Esophagus squamous epithelium (tissue), 5 donors: ENCODE measurements at regions of chr7 and their contacts with region 1.

Region 1: GRCh38 chr7:100799014-100799896 is 28.1 kb downstream of the EPHB4 start:
- DNase-seq: no peak
- H3K4me3 ChIP-seq: no peak overlapping the region
- H3K27ac ChIP-seq: no peak overlapping the region
- H3K4me1 ChIP-seq: peaks cover 10 to 56% (median 28%) of the 10 kb centered on the region in 3 donors
- H3K27me3 ChIP-seq: peaks cover 0 to 3% (median 0%) of the 10 kb centered on the region in 4 donors
- CTCF ChIP-seq: peak in 5 of 6 experiments; percentile 71 to 83 (median 75)
- POLR2A ChIP-seq: no peak

Region 2: DNA sequence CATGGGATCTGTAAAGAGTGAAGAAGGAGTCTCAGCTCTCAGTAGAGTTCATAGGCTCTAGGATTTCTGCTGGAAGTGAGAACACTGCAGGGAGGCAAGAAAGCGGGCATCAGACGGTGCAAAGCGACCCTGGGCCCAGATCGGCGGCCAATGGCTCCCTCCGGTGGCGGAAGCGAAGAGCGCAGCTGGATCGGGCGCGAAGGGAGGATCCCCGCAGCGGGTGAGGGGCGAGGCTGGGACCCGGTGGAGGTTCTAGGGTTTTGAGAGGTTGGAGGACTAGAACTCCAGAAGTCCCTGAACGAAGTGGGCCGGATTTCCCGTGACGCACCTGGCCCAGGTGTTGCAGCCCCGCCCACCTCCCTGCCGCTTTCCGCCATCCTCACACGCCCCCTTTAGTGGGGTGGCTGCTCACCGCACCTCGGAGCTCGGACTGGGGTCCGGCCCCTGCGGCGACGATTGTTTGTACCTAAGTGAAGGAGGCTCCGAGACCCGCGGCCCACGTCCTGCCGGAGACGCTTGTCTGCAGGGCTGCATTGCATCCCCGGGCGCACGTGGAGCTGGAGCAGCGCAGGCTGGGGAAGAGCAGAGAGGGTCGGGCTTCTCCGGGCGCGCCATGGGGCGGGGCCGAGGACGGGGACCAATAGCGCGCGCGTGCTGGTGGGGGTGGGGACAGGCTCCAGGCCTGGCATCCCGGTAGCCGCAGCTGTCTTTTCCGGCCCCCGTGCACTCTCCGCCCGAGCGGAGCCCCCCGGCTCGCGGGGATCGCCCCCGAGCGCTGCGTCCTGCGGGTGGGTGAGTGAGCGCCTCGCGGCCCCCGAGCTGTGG is 53.0 kb after region 1 on chr7 and contains the start of gene SLC12A9:
- intact Hi-C with region 1: loop called (anchors 5 kb)
- DNase-seq: peak; percentile 52
- H3K4me3 ChIP-seq: peak within 1 kb of the TSS; percentile 62 to 91 (median 80)
- H3K27ac ChIP-seq: peak within 1 kb of the TSS; percentile 70 to 87 (median 80)
- H3K4me1 ChIP-seq: peaks cover 17 to 34% (median 18%) of the 10 kb centered on the region in 3 donors
- H3K27me3 ChIP-seq: no peaks in the 10 kb centered on the region
- CTCF ChIP-seq: peak; percentile 88 to 95 (median 92)
- POLR2A ChIP-seq: peak in 2 of 4 donors; percentile 31 to 60
- total RNA-seq, gene SLC12A9: 9.9 to 19.6 (median 17.3) TPM

Region 3: GRCh38 chr7:101009629-101010028 is 210.4 kb after region 1 on chr7:
- intact Hi-C with region 1: no loop called
- DNase-seq: no peak
- H3K4me3 ChIP-seq: no peak overlapping the region
- H3K27ac ChIP-seq: no peak overlapping the region
- H3K4me1 ChIP-seq: no peaks in the 10 kb centered on the region
- H3K27me3 ChIP-seq: peaks cover 0 to 9% (median 0%) of the 10 kb centered on the region in 4 donors
- CTCF ChIP-seq: no peak
- POLR2A ChIP-seq: no peak